OCI-LY7 (cell line): ENCODE measurements at regions of chr3 and their contacts with region 1.

Region 1: DNA sequence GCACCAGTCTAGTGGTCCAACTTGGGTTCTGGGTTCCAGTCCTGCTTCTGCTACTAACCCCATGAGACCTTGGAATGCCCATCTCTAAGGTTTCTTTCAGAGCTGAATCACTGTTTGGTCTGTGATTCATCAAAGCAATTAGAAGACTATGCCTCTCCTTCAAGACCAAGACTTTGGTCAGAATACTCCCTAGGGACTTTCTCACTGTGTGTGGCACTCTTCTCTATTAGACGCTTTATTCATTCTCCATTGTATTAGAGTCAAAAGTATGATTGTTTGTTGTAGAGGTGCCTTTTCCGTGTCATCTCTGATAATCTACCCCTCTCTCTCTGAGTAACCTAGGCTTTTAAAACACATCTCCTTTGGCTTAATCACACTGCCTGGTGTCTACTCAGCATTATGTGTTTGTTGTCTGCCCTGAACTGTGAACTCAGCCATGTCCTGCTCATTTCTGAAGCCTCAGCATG is 90.5 kb downstream of the LPP start:
- DNase-seq: peak; percentile 76
- H3K4me3 ChIP-seq: peak overlapping the region; percentile 21
- H3K27ac ChIP-seq: peak overlapping the region; percentile 98
- H3K4me1 ChIP-seq: peaks cover 96% of the 10 kb centered on the region
- CTCF ChIP-seq: no peak

Region 2: DNA sequence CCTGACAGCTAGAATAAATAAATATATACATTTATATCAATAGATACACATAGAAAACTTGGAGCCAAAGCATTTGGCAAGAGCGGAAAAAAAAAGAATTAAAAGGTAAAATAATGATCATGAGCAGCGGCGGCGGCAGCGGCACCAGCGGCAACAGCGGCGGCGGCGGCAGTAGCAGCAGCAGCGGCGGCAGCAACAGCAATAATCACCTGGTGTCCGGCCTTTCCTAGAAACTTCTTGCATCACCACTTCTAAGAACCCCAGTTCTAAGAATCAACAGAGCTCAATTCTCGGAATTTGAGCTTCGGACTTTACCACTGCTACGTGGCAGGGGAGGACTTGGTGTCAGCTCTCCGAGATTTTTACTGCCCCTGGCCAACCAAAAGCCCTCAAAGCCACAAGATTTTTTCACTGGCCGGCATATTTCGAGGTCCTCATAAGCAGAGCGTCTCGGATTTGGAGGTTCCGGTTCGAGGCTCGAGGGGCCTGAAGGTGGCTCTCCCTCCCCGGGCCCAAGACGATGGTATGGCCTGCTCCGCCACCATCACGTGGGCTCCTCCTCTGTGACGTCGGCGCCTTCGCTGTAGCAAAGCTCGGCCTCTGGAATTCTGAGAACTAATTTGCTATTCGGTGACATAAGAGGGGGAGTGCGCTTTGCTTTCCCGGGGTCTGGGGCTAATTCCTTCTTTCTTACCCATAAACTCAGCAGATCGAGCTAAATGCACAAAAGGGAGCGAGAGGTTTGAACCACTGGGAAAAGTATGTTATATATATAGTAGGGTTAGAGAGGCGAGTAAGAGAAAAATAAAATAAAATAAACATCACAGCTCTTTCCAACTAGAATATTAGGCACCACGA is 499.0 kb before region 1 on chr3 and contains the start of gene BCL6:
- CTCF ChIA-PET with region 1: interaction called, 3 read pairs
- POLR2A ChIA-PET with region 1: interaction called, 15 read pairs
- intact Hi-C with region 1: loop called (anchors 1 kb)
- DNase-seq: peak; percentile 98
- H3K4me3 ChIP-seq: peak within 1 kb of the TSS; percentile 86
- H3K27ac ChIP-seq: peak within 1 kb of the TSS; percentile 90
- H3K4me1 ChIP-seq: peaks cover 39% of the 10 kb centered on the region
- CTCF ChIP-seq: no peak
- total RNA-seq, gene BCL6: 62.4 and 65.6 TPM in 2 replicates

Region 3: DNA sequence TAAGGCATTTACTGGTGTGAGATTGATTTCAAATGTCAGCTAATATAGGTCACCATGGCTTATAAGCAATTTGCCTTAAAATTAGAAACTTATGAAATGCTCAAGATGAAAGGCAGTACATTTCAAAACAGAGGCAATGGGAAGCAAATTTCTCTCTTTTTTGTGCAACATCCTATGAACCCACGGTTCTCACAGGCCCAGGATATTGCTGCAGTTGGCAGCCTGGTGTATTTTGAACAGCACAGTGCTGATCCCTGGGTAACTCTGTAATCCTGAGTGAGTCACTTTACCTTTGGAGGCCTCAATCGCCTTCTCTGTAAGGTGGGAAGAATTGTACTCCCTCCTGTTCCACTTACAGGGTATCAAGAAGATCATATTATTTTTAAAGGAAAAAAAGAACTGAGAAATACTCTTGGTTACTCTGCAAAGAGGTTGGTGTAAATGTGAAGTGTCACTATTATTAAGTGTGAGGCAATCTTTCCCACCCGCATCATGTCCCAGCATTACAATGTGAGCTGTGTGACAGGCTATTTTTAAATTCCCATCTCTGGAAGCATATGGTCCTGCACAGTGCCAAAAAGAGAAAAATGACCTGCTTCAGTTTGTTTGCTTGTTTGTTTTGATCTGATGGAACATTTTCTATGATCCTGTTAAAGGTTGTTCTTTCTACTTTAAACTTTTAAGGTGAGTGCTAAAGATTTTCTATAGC is 280.6 kb before region 1 on chr3:
- CTCF ChIA-PET with region 1: no interaction called
- POLR2A ChIA-PET with region 1: interaction called, 15 read pairs
- intact Hi-C with region 1: loop called (anchors 1 kb)
- DNase-seq: peak; percentile 48
- H3K4me3 ChIP-seq: peak overlapping the region; percentile 1
- H3K27ac ChIP-seq: peak overlapping the region; percentile 99
- H3K4me1 ChIP-seq: peaks cover 100% of the 10 kb centered on the region
- CTCF ChIP-seq: no peak

Region 4: GRCh38 chr3:188000361-188000861 is 244.0 kb before region 1 on chr3:
- CTCF ChIA-PET with region 1: no interaction called
- POLR2A ChIA-PET with region 1: interaction called, 3 read pairs
- intact Hi-C with region 1: loop called (anchors 1 kb)
- DNase-seq: peak; percentile 82
- H3K4me3 ChIP-seq: peak overlapping the region; percentile 60
- H3K27ac ChIP-seq: peak overlapping the region; percentile 96
- H3K4me1 ChIP-seq: peaks cover 83% of the 10 kb centered on the region
- CTCF ChIP-seq: no peak

Region 5: DNA sequence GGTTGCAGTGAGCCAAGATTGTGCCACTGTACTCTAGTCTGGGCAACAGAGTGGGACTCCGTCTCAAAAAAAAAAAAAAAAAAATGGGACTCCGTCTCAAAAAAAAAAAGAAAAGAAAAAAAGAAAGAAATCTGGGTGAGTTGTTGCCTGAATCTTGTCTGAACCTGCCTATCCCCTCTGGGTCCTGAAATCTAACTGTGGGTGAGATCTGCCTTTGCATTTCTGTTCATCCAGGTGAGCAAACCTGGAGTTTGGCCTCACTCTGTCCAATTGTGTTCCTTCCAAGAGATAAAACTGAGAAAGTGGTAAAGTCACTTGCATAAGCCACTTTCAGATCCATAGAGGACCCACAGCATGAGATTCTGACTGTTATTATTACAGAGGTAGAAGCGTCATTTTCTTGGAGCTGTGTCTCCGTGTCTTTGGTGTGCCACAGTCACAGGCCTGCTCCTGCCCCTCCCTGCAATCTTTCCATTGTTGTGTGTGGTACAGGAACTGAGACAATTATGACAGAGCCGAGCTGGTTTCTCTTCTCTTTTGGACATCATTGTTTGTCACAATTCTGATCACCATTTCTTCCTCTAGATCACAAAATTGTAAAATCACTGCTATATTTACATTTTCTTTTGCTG is 145.4 kb after region 1 on chr3:
- CTCF ChIA-PET with region 1: interaction called, 3 read pairs
- POLR2A ChIA-PET with region 1: no interaction called
- intact Hi-C with region 1: loop called (anchors 5 kb)
- DNase-seq: peak; percentile 92
- H3K4me3 ChIP-seq: peak overlapping the region; percentile 53
- H3K27ac ChIP-seq: peak overlapping the region; percentile 89
- H3K4me1 ChIP-seq: peaks cover 50% of the 10 kb centered on the region
- CTCF ChIP-seq: no peak

Region 6: DNA sequence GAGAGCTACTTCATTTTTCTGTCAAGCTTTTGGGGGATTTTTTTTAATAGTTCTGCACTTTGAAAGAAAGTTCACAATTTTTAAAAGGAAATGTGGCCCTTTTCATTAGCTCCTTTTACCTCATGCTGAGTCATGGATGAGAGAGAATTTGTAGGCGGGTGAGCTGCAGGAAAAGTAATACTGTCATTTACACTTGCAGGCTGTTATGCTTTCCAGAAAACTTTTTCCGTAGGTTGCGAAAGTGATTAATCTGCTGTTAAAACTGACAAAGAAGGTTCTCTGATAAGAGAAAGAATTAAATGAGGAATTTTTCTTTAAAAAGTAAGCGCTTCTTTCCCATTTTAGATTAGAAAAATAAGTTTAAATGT is 339.7 kb after region 1 on chr3:
- CTCF ChIA-PET with region 1: no interaction called
- POLR2A ChIA-PET with region 1: no interaction called
- intact Hi-C with region 1: loop called (anchors 5 kb)
- DNase-seq: peak; percentile 14
- H3K4me3 ChIP-seq: peak overlapping the region; percentile 9
- H3K27ac ChIP-seq: no peak overlapping the region
- H3K4me1 ChIP-seq: peaks cover 81% of the 10 kb centered on the region
- CTCF ChIP-seq: no peak

Region 7: GRCh38 chr3:188954590-188955208 is 710.3 kb after region 1 on chr3:
- CTCF ChIA-PET with region 1: no interaction called
- POLR2A ChIA-PET with region 1: interaction called, 3 read pairs
- intact Hi-C with region 1: loop called (anchors 10 kb)
- DNase-seq: peak; percentile 84
- H3K4me3 ChIP-seq: no peak overlapping the region
- H3K27ac ChIP-seq: no peak overlapping the region
- H3K4me1 ChIP-seq: peaks cover 12% of the 10 kb centered on the region
- CTCF ChIP-seq: peak; percentile 99